Sigmoid colon (tissue), 7 donors: ENCODE measurements at regions of chr13 and their contacts with region 1.

Region 1: DNA sequence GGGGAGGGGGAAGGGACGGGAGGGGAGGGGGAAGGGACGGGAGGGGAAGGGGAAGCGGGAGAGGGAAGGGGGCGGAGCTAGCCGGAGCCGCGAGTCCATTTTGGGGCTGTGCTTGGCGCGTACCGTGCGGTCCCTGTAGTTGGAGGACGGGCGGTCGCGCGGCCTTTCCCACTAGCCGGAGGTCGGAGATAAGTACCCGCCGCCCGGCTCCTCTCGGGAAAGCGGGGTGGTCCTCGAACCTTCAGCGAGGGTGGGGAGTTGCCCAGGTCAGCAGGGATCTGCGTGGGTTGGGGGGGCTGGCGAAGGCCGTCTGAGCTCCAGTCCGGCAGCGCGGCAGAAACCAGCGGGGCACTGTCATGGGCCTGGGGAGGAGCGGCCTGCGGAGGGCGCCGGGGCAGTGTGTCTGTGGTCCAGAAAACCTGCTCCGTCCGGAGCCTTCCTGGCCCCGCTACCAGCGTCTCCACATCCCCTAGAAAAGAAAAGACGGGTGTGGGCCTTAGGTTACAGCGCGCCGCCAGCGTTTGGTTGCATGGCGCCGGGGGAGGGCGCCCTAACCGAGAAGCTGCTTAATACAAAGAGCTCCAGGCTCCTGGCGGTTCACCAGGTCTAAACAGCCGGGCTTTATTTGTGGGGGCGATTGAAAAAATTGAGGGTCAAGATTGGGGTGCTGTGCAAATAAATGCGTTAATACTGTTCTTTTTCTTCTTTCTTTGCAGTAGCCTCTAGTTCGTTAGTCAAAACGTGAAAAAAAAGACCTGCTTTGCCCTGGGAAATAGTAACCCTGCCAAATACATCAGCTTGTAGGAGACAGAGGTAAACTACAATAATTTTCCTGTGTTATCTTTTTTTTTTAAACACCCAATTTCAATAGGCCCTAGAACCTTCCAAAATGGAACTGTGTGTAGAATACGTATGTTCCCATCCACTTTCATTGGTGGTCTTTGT is at the start of gene TRIM13:
- DNase-seq: peak; percentile 95
- H3K4me3 ChIP-seq: peak within 1 kb of the TSS; percentile 78 to 89 (median 86)
- H3K27ac ChIP-seq: peak within 1 kb of the TSS; percentile 99 to 100 (median 99)
- H3K4me1 ChIP-seq: peaks cover 0 to 51% (median 46%) of the 10 kb centered on the region in 4 donors
- H3K27me3 ChIP-seq: no peaks in the 10 kb centered on the region
- CTCF ChIP-seq: peak; percentile 34 to 76 (median 64)
- EP300 ChIP-seq: no peak
- POLR2A ChIP-seq: peak; percentile 47 to 58
- total RNA-seq, gene TRIM13: 17.1 to 25.0 (median 22.9) TPM

Region 2: GRCh38 chr13:50911937-50912795 is 914.9 kb after region 1 on chr13:
- intact Hi-C with region 1: loop called (anchors 5 kb)
- DNase-seq: peak; percentile 91
- H3K4me3 ChIP-seq: no peak overlapping the region
- H3K27ac ChIP-seq: peak overlapping the region; percentile 55 to 91 (median 87)
- H3K4me1 ChIP-seq: peaks cover 0 to 42% (median 34%) of the 10 kb centered on the region in 4 donors
- H3K27me3 ChIP-seq: no peaks in the 10 kb centered on the region
- CTCF ChIP-seq: peak; percentile 54 to 81 (median 70)
- EP300 ChIP-seq: no peak
- POLR2A ChIP-seq: no peak